ENCODE measurements at regions of chr7 and their contacts with region 1.

Region 1: DNA sequence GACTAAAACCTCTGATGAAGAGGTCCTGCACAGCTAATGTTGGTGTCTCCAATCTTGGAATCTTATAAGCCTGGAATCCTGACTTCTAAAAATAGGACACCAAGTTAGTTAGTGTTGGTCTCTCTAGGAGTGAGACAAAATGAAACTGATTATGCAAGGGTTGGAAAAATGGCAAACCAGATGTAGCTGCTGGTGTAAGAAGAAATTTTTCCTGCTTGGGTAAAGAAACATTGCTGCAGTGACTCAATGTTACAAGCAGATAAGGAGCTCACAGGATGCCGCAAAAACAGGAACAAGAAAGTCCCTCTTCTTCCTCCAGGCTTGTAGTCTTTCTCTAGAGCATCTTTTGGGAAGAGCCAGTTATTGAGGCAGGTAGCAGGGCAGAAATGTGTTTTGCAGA is 449.0 kb downstream of the ETV1 start:
- DNase-seq: no peak

Region 2: DNA sequence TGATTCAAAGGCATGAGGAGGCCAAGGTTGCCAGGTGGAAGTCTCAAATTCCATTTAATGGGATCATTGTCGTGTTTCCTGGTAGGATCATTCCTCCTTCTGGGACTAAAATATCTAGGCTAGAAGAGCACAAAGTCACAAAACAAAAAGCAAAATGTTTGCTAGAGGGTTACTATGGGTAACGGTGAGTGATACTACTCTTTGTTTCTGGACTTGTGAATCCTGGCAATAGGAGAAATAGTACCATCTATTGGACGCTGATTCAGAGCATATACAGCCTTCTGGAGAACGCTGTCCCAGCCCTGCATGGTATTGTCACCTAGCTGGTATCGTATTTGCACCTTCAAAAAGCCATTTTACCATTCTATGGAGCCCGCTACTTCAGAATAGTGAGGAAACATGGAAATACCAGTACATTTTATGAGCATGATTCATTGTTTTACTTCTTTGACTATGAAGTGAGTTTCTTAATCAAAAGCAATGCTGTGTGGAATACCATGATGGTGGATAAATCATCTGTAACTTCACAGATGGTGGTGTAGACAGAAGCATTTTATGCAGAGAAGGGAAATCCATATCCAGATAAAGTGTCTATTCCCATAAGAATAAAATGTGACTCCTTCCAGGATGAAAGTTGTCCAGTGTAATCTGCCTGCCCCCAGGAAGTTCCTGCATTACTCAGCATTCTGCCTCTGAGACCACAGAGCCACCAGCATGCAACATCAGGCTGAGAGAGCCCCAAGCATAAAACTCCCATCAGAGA is 88.0 kb after region 1 on chr7:
- intact Hi-C with region 1: loop called in 1 of 2 experiments (anchors 2 kb)
- DNase-seq: no peak

Region 3: GRCh38 chr7:14009453-14010418 is 469.3 kb after region 1 on chr7:
- intact Hi-C with region 1: no loop called
- DNase-seq: no peak